ENCODE measurements at regions of chr2 and their contacts with region 1.

Region 1: DNA sequence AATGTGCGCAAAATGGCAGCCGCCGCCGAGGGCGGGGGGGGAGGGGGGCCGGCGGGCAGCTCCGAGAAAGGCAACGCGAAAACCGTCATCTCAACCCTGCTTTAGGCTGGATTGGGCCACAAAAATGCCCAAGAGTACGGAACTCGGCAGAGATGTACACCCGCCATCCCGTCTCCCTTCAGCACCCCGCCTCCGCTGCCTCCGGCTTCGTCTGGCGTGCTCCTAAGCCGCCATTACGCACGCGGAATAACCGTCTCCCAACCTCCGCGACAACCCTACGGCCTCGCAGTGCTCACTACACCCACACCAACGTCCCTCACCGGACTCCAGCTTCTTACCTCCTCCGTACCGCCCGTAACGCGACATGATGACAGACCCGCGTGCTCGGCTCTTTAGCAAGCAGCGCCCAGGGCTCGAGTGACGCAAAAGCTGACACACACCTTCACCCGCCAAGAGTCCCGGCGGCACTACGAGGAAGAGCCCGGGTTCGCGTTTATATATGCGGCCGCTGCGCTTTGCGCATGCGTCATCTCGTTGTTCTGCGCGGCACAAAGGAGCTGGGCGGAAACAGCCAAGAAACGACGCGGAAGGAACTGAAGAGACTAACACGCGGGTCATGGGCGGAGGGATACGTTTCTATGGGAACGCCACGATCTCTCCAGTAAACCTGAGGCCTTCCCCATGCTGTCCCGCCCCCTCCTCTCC is at the start of gene SRSF7:
- DNase-seq: peak; percentile 98
- ATAC-seq: peak; percentile 75
- H3K4me3 Mint-ChIP-seq: peak within 1 kb of the TSS; percentile 98
- H3K27ac Mint-ChIP-seq: peak within 1 kb of the TSS; percentile 99
- H3K4me1 Mint-ChIP-seq: peaks cover 59% of the 10 kb centered on the region
- H3K27me3 Mint-ChIP-seq: no peaks in the 10 kb centered on the region
- CTCF ChIP-seq: no peak
- total RNA-seq, gene SRSF7: 247 and 254 TPM in 2 replicates

Region 2: DNA sequence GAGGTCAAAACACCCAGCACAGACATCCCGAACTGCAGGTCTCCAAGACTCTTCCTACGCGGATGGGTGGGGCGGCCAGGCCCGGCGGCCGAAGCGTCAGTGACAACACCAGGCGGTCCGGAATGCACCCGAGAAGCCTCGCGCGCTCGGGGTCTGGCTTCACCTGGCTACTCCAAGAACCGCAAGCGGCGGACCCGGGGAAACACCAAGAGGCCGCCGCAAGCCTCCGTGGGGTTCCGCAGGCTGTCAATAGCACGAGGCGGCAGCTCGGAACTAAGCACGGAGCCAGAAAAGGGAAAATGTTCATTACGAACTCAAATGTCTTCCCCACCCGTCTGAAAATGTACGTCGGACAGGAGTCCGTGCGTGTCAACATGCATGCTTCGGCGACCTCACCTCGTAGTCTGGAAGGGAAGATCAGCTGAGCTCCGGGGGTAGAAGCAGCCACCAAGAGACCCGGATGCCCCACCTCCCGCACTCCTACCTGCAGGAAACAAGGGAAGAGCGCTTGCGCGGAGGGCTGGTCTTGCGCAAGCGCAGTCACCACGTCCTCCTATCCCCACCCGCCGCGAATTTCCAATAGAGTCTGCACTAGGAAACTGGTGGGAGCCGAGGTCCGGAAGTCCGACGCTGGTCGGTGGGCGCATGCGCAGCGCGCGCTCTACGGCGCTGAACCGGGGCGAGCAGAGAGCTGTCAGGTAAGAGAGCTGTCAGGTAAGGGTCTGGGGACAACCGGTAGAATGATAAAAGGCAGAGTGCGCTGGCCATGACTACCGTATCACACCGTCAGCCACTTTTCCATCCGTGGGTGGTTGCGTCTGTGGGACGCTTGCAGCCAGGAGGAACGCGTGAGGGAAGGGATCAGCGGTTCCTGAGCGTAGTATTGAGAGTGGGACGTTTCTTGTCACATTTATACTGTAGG is 1666.9 kb before region 1 on chr2 and contains the starts of genes GPATCH11 and HEATR5B:
- CTCF ChIA-PET with region 1: no interaction called
- POLR2A ChIA-PET with region 1: no interaction called
- intact Hi-C with region 1: loop called (anchors 5 kb)
- DNase-seq: peak; percentile 83
- ATAC-seq: peak; percentile 83
- H3K4me3 Mint-ChIP-seq: no peak within 1 kb of the TSS
- H3K27ac Mint-ChIP-seq: no peak within 1 kb of the TSS
- H3K4me1 Mint-ChIP-seq: peaks cover 23% of the 10 kb centered on the region
- H3K27me3 Mint-ChIP-seq: no peaks in the 10 kb centered on the region
- CTCF ChIP-seq: no peak
- total RNA-seq, gene GPATCH11: 30.7 and 32.9 TPM in 2 replicates
- total RNA-seq, gene HEATR5B: 42.6 and 50.3 TPM in 2 replicates

Region 3: DNA sequence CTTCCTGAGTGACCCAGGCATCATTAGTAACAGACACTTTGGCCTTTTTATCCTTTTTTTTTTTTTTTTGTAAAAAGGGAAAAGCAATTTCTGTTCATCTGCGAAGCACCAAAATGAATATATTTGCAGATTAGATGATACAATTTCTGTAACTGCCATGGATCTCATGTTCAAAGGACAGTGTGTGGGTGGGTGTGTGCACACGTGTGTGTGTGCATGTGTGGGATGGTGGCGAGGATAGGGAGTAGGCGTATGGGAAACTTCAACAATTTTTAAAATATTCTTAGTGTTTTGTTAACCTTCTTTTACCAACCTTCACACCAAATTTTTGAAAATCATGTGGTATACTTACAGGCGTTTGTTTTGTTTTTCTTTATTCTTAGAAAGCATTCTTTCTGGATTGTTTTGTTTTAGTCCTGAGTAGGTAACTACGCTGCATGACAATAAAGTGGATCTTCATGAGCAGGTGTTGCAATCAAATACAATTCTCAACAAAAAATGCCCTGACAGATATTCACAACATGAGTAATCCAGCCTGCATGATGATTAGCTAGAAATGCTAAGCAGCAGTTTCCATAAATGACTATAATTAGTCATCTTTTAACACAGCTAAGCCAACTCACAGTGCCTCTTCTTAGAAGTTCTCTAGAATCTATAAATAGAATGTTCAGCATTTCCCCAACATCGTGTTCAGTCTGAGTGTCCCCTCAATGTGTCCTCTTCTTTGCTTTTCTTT is 879.4 kb before region 1 on chr2:
- CTCF ChIA-PET with region 1: no interaction called
- POLR2A ChIA-PET with region 1: no interaction called
- intact Hi-C with region 1: no loop called
- DNase-seq: no peak
- ATAC-seq: no peak
- H3K4me3 Mint-ChIP-seq: no peak overlapping the region
- H3K27ac Mint-ChIP-seq: no peak overlapping the region
- H3K4me1 Mint-ChIP-seq: peaks cover 2% of the 10 kb centered on the region
- H3K27me3 Mint-ChIP-seq: peaks cover 4% of the 10 kb centered on the region
- CTCF ChIP-seq: no peak

Region 4: GRCh38 chr2:37925063-37925897 is 825.8 kb before region 1 on chr2 and contains the start of gene RMDN2:
- CTCF ChIA-PET with region 1: no interaction called
- POLR2A ChIA-PET with region 1: interaction called, 3 read pairs
- intact Hi-C with region 1: loop called (anchors 5 kb)
- DNase-seq: peak; percentile 86
- ATAC-seq: peak; percentile 91
- H3K4me3 Mint-ChIP-seq: peak within 1 kb of the TSS; percentile 96
- H3K27ac Mint-ChIP-seq: peak within 1 kb of the TSS; percentile 93
- H3K4me1 Mint-ChIP-seq: peaks cover 28% of the 10 kb centered on the region
- H3K27me3 Mint-ChIP-seq: no peaks in the 10 kb centered on the region
- CTCF ChIP-seq: no peak
- total RNA-seq, gene RMDN2: 7.0 TPM in 2 replicates

Region 5: DNA sequence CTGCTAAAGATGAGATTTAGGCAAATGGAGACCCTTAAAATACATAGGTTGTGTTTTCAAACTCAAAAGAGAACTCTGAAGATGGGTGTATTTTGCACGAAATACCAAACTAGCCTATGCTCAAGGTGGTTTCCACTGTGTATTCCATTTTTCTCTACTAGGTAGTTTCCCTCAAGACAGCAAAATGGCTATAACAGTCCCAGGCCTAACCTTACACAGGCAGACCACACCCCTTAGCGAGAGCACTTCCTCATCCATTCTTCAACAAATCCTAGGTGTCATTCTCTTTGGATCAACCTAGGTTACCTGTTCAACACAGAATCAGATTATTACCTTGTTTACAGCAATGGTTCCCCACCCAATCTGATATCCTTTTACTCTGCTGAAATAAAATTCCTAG is 191.0 kb before region 1 on chr2:
- CTCF ChIA-PET with region 1: no interaction called
- POLR2A ChIA-PET with region 1: no interaction called
- intact Hi-C with region 1: no loop called
- DNase-seq: no peak
- ATAC-seq: no peak
- H3K4me3 Mint-ChIP-seq: no peak overlapping the region
- H3K27ac Mint-ChIP-seq: no peak overlapping the region
- H3K4me1 Mint-ChIP-seq: no peaks in the 10 kb centered on the region
- H3K27me3 Mint-ChIP-seq: peaks cover 3% of the 10 kb centered on the region
- CTCF ChIP-seq: no peak

Region 6: DNA sequence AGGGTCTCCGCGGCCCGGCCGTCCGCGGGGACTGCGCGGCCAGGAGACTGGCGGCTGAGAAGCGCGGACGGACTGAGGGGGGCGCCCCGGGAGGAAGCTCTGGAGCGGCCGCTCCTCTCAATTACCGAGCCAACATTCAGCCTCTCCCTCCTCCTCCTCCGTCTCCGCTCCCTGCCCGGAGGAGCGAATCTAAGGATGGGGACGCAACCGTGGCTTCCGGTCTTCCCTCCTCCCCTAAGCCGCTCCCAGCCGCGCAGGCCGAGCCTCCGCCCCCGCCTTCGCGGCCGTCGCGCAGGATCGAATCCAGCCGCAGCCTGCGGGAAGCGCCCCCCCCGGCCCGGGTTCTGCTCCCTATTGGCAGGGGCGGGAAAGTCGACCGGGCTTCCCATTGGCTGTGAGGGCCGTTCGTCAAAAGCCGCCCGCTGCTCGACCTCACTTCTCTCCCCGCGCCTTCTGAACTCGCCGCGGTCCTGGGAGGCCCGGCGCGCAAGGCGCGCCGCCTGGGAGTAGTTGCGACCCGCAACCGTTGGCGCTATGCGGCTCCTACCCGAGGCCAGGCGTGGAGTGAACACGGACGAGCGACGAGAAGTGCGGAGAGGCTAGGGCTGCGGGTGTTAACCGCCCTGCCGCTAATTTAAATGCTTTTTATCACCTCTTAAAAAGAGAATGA is 148.2 kb before region 1 on chr2 and contains the start of gene HNRNPLL:
- CTCF ChIA-PET with region 1: interaction called, 3 read pairs
- POLR2A ChIA-PET with region 1: interaction called, 39 read pairs
- intact Hi-C with region 1: loop called (anchors 1 kb)
- DNase-seq: peak; percentile 84
- ATAC-seq: peak; percentile 87
- H3K4me3 Mint-ChIP-seq: peak within 1 kb of the TSS; percentile 89
- H3K27ac Mint-ChIP-seq: peak within 1 kb of the TSS; percentile 65
- H3K4me1 Mint-ChIP-seq: peaks cover 20% of the 10 kb centered on the region
- H3K27me3 Mint-ChIP-seq: peaks cover 38% of the 10 kb centered on the region
- CTCF ChIP-seq: no peak
- total RNA-seq, gene HNRNPLL: 8.6 and 8.8 TPM in 2 replicates

Region 7: GRCh38 chr2:38734299-38735058 is 16.6 kb before region 1 on chr2:
- CTCF ChIA-PET with region 1: no interaction called
- POLR2A ChIA-PET with region 1: interaction called, 14 read pairs
- intact Hi-C with region 1: no loop called
- DNase-seq: no peak
- ATAC-seq: no peak
- H3K4me3 Mint-ChIP-seq: no peak overlapping the region
- H3K27ac Mint-ChIP-seq: no peak overlapping the region
- H3K4me1 Mint-ChIP-seq: peaks cover 2% of the 10 kb centered on the region
- H3K27me3 Mint-ChIP-seq: no peaks in the 10 kb centered on the region
- CTCF ChIP-seq: no peak

Region 8: GRCh38 chr2:38835015-38835601 is 84.1 kb after region 1 on chr2:
- CTCF ChIA-PET with region 1: no interaction called
- POLR2A ChIA-PET with region 1: interaction called, 20 read pairs
- intact Hi-C with region 1: loop called (anchors 1 kb)
- DNase-seq: no peak
- ATAC-seq: no peak
- H3K4me3 Mint-ChIP-seq: no peak overlapping the region
- H3K27ac Mint-ChIP-seq: peak overlapping the region; percentile 93
- H3K4me1 Mint-ChIP-seq: peaks cover 40% of the 10 kb centered on the region
- H3K27me3 Mint-ChIP-seq: no peaks in the 10 kb centered on the region
- CTCF ChIP-seq: no peak

Region 9: GRCh38 chr2:38886063-38886462 is 135.0 kb after region 1 on chr2:
- CTCF ChIA-PET with region 1: no interaction called
- POLR2A ChIA-PET with region 1: no interaction called
- intact Hi-C with region 1: no loop called
- DNase-seq: no peak
- ATAC-seq: no peak
- H3K4me3 Mint-ChIP-seq: no peak overlapping the region
- H3K27ac Mint-ChIP-seq: no peak overlapping the region
- H3K4me1 Mint-ChIP-seq: no peaks in the 10 kb centered on the region
- H3K27me3 Mint-ChIP-seq: no peaks in the 10 kb centered on the region
- CTCF ChIP-seq: no peak

Region 10: DNA sequence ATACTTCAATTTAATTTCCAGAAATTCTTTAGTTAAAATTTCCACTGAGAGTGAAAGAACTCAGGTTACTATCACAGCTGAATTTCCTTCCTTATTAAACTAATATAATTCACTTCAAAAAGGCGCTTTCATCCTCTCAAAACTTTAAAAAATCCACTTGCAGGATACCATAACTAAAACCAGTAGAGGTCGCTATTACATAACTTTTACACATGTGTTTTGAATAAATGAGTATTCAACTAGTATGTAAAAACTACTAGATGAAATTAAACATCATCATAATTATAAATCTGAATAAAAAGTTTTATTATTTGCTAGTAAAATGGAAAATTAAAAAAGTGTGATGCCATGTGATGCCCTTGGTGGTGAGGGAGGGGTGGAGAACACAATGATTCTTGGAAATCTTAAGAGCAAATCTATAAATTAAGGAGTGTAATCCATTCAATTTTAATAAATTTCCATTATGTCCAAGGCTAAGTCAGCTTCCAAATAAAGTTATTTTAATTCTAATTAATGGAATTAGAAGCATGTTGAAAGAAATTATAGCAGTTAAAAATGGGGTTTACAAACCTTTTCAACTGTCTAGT is 308.4 kb after region 1 on chr2:
- CTCF ChIA-PET with region 1: no interaction called
- POLR2A ChIA-PET with region 1: no interaction called
- intact Hi-C with region 1: no loop called
- DNase-seq: no peak
- ATAC-seq: no peak
- H3K4me3 Mint-ChIP-seq: no peak overlapping the region
- H3K27ac Mint-ChIP-seq: no peak overlapping the region
- H3K4me1 Mint-ChIP-seq: no peaks in the 10 kb centered on the region
- H3K27me3 Mint-ChIP-seq: no peaks in the 10 kb centered on the region
- CTCF ChIP-seq: peak; percentile 67

Region 11: DNA sequence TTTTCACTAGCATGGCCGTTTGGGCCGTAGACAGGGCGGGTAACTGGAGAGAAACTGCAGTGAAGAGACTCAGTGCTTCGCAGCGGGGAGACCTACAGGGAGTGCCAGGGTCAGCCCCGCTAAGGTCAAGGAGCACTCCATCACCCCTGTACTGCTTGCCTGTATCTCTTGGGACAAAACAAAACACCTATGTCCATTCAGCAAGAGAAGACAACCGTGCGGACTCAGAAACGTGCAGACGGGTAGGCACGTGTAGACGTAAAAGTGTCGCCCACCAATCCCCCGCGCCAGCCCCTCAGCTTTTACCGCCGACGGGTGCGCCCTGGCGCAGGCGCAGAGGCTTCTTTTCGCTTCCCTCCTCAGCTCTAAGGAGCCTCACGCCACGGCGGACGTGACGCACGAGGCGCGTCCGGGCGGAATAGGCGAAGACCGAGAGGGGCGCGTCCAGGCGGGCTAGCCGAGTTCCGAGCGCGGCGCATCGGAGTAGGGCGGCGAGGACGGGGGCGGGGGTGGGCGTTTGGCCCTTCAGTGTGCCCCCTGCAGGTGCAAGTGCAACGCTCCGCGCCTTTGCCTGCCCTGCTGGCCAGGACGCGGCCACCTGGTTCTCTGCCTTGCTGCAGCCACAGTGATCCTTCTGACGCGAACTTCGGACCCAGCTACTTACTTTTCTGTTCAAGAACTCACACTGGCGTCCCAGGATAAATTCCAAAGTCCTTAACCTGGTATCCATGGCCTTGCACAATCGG is 373.1 kb after region 1 on chr2:
- CTCF ChIA-PET with region 1: no interaction called
- POLR2A ChIA-PET with region 1: interaction called, 19 read pairs
- intact Hi-C with region 1: loop called (anchors 1 kb)
- DNase-seq: peak; percentile 93
- ATAC-seq: peak; percentile 67
- H3K4me3 Mint-ChIP-seq: peak overlapping the region; percentile 90
- H3K27ac Mint-ChIP-seq: peak overlapping the region; percentile 92
- H3K4me1 Mint-ChIP-seq: peaks cover 56% of the 10 kb centered on the region
- H3K27me3 Mint-ChIP-seq: no peaks in the 10 kb centered on the region
- CTCF ChIP-seq: no peak

Measured in activated B cell treated with CpG ODN at 0.5 μM for 24 hours (primary cell).